ENCODE measurements at regions of chr3 and their contacts with region 1.

Region 1: GRCh38 chr3:188400494-188401243 is 246.7 kb downstream of the LPP start:
- DNase-seq: no peak
- H3K4me3 ChIP-seq: no peak overlapping the region
- H3K27ac ChIP-seq: peak overlapping the region in 1 of 4 donors; percentile 24
- H3K4me1 ChIP-seq: peaks cover 22 to 59% (median 27%) of the 10 kb centered on the region in 4 donors
- H3K27me3 ChIP-seq: no peaks in the 10 kb centered on the region
- CTCF ChIP-seq: no peak
- EP300 ChIP-seq: no peak
- POLR2A ChIP-seq: no peak

Region 2: DNA sequence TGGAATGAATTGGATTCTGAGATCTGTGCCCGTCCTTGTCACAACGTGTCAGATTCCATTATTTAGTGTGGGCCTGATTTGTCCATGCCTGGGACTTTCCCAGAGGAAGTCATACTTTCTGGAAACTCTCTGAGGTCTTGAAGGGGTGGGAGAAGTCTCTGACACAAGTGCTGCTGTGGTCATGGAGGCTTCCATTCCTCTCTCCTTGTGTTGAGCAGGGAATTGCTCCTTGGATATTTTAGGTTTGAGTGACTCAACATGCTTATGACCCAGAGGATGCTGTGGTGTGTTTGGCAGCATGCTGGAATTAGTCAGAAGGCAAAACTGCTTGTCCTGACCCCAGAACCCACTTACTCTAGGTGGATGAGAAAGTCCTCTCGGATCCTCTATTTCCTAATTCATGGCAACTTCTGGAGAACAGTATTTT is 114.6 kb before region 1 on chr3:
- in situ Hi-C with region 1: no loop called
- intact Hi-C with region 1: no loop called
- DNase-seq: no peak
- H3K4me3 ChIP-seq: no peak overlapping the region
- H3K27ac ChIP-seq: peak overlapping the region; percentile 58 to 79 (median 70)
- H3K4me1 ChIP-seq: peaks cover 15 to 69% (median 35%) of the 10 kb centered on the region in 4 donors
- H3K27me3 ChIP-seq: no peaks in the 10 kb centered on the region
- CTCF ChIP-seq: no peak
- EP300 ChIP-seq: no peak
- POLR2A ChIP-seq: no peak

Region 3: DNA sequence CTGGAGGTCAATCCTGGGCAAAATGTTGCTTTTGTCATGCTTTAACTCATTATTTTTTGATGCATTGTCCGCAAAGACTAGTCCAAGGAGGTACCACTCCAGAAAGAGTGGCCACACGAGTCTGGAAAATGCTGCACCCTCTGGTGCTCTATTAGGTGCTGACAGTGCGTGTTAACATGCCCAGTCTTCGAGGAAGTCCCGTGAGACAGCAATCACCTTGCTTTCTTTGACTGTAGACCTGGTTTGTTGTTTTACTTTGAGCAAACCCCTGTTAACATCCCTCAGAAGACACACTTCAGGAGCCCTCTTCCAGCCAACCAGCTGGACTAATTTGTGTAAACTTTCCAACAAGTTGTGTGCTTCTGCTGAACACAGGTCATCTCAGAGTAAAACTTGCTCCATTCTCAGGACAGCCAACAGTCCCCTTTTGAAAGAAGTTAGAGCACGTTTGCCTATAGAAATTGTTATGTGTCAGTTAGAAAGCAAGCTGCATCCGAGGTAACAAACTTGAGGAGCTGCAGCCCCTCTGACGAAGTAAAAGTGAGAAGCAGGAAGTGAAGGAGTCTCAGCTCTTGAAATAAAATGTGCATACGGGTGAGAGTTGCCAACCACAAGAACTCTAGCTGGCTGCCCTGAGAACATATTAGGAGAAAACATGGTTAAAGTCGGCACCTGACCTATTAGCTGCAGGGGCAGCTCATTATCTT is 41.7 kb before region 1 on chr3:
- in situ Hi-C with region 1: no loop called
- intact Hi-C with region 1: loop called (anchors 1 kb)
- DNase-seq: no peak
- H3K4me3 ChIP-seq: no peak overlapping the region
- H3K27ac ChIP-seq: peak overlapping the region in 2 of 4 donors; percentile 15 to 21
- H3K4me1 ChIP-seq: peaks cover 3 to 32% (median 11%) of the 10 kb centered on the region in 4 donors
- H3K27me3 ChIP-seq: no peaks in the 10 kb centered on the region
- CTCF ChIP-seq: no peak
- EP300 ChIP-seq: no peak
- POLR2A ChIP-seq: no peak

Region 4: GRCh38 chr3:188468662-188469061 is 68.0 kb after region 1 on chr3:
- in situ Hi-C with region 1: no loop called
- intact Hi-C with region 1: no loop called
- DNase-seq: peak; percentile 56
- H3K4me3 ChIP-seq: no peak overlapping the region
- H3K27ac ChIP-seq: peak overlapping the region; percentile 37 to 72 (median 66)
- H3K4me1 ChIP-seq: peaks cover 0 to 26% (median 14%) of the 10 kb centered on the region in 4 donors
- H3K27me3 ChIP-seq: no peaks in the 10 kb centered on the region
- CTCF ChIP-seq: no peak
- EP300 ChIP-seq: no peak
- POLR2A ChIP-seq: no peak